ENCODE measurements at regions of chr14 and their contacts with region 1.

Region 1: GRCh38 chr14:80055667-80056496 is 155.4 kb downstream of the DIO2 start:
- DNase-seq: no peak
- H3K4me3 ChIP-seq: no peak overlapping the region
- H3K27me3 ChIP-seq: no peaks in the 10 kb centered on the region
- CTCF ChIP-seq: peak; percentile 81

Region 2: GRCh38 chr14:78959674-78960264 is 1096.1 kb before region 1 on chr14:
- CTCF ChIA-PET with region 1: interaction called, 12 read pairs
- POLR2A ChIA-PET with region 1: no interaction called
- DNase-seq: peak; percentile 16
- H3K4me3 ChIP-seq: no peak overlapping the region
- H3K27me3 ChIP-seq: no peaks in the 10 kb centered on the region
- CTCF ChIP-seq: peak; percentile 88

Region 3: DNA sequence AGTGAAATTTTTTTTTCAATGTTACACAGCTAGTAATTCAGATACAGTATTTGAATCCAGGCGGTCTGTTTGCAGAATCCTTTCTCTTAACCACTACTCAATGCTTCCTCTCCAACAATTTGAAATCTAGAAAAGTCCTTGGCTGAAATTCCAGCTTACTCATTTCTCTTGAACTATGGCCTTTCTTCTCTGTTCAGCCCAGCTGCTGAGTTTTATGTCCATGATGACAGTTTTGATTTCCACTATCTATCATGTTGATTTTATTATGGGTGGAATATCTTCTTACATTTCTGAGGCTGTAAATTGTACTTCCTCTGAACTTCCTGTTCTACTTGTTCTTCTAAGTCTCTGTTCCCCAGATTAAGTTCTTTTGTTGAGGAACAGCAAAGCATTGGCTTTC is 159.9 kb before region 1 on chr14:
- CTCF ChIA-PET with region 1: no interaction called
- POLR2A ChIA-PET with region 1: no interaction called
- DNase-seq: peak; percentile 8
- H3K4me3 ChIP-seq: no peak overlapping the region
- H3K27me3 ChIP-seq: no peaks in the 10 kb centered on the region
- CTCF ChIP-seq: no peak

Region 4: GRCh38 chr14:80213599-80213998 is 157.7 kb after region 1 on chr14:
- CTCF ChIA-PET with region 1: interaction called, 11 read pairs
- POLR2A ChIA-PET with region 1: no interaction called
- DNase-seq: no peak
- H3K4me3 ChIP-seq: no peak overlapping the region
- H3K27me3 ChIP-seq: no peaks in the 10 kb centered on the region
- CTCF ChIP-seq: peak; percentile 76

Region 5: DNA sequence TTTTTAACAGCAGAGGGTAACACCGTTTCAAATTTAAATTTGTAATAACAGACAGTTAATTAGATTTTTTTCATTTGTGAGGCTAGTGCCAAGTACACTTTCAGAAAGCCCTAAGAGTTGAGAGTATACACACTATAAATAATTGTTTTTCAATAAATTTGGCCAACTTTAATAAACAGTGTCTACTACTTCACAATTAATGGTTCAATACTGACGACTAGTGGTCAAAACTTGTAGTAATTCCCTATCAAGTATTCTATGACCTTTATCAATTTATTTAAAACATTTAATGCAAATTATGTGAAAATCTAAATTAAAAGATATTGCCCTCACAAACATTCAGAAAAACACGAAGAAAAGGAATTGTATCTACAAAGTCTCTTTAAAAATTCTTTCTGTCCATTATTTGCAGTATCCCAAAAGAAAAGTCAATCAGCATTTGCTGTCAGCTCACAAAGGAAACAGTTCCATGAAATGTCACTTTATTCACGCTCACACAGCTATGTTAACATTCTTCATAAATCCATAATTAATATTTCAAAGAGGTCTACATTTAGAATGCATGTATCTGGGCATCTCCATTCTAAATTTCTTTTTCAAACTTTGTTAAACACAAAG is 794.4 kb after region 1 on chr14:
- CTCF ChIA-PET with region 1: interaction called, 34 read pairs
- POLR2A ChIA-PET with region 1: no interaction called
- DNase-seq: peak; percentile 9
- H3K4me3 ChIP-seq: no peak overlapping the region
- H3K27me3 ChIP-seq: no peaks in the 10 kb centered on the region
- CTCF ChIP-seq: peak; percentile 33

Region 6: GRCh38 chr14:80987235-80988032 is 931.6 kb after region 1 on chr14:
- CTCF ChIA-PET with region 1: interaction called, 16 read pairs
- POLR2A ChIA-PET with region 1: no interaction called
- DNase-seq: peak; percentile 17
- H3K4me3 ChIP-seq: no peak overlapping the region
- H3K27me3 ChIP-seq: 0 out of 2 replicates have a peak, but pooled peaks cover 5% of the 10 kb centered on the region
- CTCF ChIP-seq: peak; percentile 95

Measured in BJ (cell line).